ENCODE measurements at regions of chr10 and their contacts with region 1.

Region 1: GRCh38 chr10:103685880-103686669 is 169.3 kb downstream of the SH3PXD2A start:
- DNase-seq: peak; percentile 62 to 87 (median 73)
- ATAC-seq: peak; percentile 99
- H3K4me3 ChIP-seq: no peak overlapping the region
- H3K4me3 Mint-ChIP-seq: no peak overlapping the region
- H3K27ac ChIP-seq: no peak overlapping the region
- H3K27ac Mint-ChIP-seq: no peak overlapping the region
- H3K4me1 ChIP-seq: peaks cover 5% of the 10 kb centered on the region
- H3K4me1 Mint-ChIP-seq: peaks cover 7% of the 10 kb centered on the region
- H3K27me3 ChIP-seq: no peaks in the 10 kb centered on the region
- H3K27me3 Mint-ChIP-seq: peaks cover 4% of the 10 kb centered on the region
- CTCF ChIP-seq: peak; percentile 93

Region 2: DNA sequence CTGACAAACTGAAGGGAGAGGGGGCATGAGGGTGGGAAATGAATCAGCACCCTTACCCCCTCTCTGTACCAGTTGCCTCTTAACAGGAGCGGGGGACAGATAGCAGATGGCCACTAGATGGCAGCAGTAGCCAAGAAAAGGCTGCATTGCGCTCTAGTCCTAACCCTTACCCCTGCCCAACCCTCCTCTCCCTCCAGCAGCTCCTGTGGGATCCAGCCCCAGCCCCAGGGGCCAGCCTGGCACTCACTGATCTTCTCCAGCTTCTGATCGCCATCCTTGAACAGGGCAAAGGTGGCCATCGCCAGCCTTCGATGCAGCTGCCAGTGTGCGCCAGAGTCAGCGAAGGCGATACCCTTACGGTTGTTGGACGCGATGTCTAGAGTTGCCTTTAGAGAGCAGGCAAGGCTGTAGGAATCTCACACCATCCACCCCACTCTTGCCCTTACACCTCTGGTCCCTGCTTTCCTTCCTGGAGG is 851.0 kb before region 1 on chr10:
- CTCF ChIA-PET with region 1: no interaction called
- POLR2A ChIA-PET with region 1: no interaction called
- intact Hi-C with region 1: loop called in 1 of 2 experiments (anchors 10 kb)
- DNase-seq: peak; percentile 55 to 87 (median 68)
- ATAC-seq: peak; percentile 93
- H3K4me3 ChIP-seq: no peak overlapping the region
- H3K4me3 Mint-ChIP-seq: no peak overlapping the region
- H3K27ac ChIP-seq: no peak overlapping the region
- H3K27ac Mint-ChIP-seq: no peak overlapping the region
- H3K4me1 ChIP-seq: peaks cover 5% of the 10 kb centered on the region
- H3K4me1 Mint-ChIP-seq: no peaks in the 10 kb centered on the region
- H3K27me3 ChIP-seq: no peaks in the 10 kb centered on the region
- H3K27me3 Mint-ChIP-seq: peaks cover 10% of the 10 kb centered on the region
- CTCF ChIP-seq: peak; percentile 86

Region 3: DNA sequence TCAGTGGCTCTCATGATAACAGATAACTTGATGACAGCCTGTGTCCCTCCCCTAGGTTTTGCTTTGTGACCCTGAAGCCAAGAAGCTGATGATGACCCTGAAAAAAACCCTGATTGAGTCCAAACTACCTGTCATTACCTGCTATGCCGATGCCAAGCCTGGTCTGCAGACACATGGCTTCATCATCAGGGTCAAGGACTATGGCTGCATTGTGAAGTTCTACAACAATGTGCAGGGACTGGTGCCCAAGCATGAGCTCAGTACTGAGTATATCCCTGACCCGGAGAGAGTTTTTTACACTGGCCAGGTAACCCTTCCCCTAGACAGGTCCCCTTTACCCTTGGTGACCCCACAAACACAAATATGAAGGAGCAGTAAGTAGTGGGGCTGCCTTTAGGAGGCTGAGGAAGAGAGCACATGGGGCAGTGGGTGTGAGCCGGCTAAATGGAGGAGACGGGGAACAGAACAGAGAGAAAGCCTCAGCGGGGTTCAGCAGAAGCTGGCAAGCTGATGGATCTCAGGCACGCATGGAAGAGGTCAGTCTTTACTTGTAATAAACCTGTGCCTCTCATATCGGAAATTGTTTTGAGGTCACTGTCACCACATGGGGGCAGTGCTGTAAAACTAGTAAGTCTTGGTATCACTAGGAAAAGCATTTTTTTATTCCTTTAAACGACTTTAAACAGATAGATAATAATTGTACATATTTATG is 269.5 kb before region 1 on chr10:
- CTCF ChIA-PET with region 1: no interaction called
- POLR2A ChIA-PET with region 1: no interaction called
- intact Hi-C with region 1: loop called (anchors 2 to 5 kb)
- DNase-seq: peak; percentile 35 to 81 (median 56)
- ATAC-seq: peak; percentile 54
- H3K4me3 ChIP-seq: no peak overlapping the region
- H3K4me3 Mint-ChIP-seq: no peak overlapping the region
- H3K27ac ChIP-seq: no peak overlapping the region
- H3K27ac Mint-ChIP-seq: no peak overlapping the region
- H3K4me1 ChIP-seq: no peaks in the 10 kb centered on the region
- H3K4me1 Mint-ChIP-seq: no peaks in the 10 kb centered on the region
- H3K27me3 ChIP-seq: no peaks in the 10 kb centered on the region
- H3K27me3 Mint-ChIP-seq: no peaks in the 10 kb centered on the region
- CTCF ChIP-seq: peak; percentile 90

Region 4: DNA sequence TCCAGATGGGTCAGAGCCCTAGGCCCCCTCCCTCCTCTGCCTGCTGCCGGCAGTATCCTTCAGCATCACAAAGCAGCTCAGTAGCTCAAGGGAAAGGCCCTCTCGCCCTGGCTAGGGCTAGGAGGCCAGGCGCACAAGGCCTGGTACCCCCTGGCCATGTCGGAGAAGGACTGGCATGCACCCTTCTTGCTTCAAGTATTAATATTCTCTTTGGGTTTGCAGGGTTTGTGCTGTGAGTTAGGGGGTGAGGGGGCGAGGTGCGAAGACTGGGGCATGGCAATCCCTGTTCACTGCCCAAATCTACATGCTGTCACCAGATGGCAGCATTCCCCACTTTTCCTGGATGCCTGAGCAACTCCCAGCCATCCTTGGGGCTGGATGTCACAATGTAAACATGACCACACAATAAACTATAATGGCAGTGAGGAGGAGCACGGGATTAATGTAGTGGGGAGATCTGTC is 87.4 kb before region 1 on chr10:
- CTCF ChIA-PET with region 1: interaction called, 7 read pairs
- POLR2A ChIA-PET with region 1: no interaction called
- intact Hi-C with region 1: loop called in 1 of 2 experiments (anchors 1 kb)
- DNase-seq: peak in 4 of 14 experiments; percentile 6 to 44 (median 40)
- ATAC-seq: no peak
- H3K4me3 ChIP-seq: no peak overlapping the region
- H3K4me3 Mint-ChIP-seq: no peak overlapping the region
- H3K27ac ChIP-seq: no peak overlapping the region
- H3K27ac Mint-ChIP-seq: no peak overlapping the region
- H3K4me1 ChIP-seq: no peaks in the 10 kb centered on the region
- H3K4me1 Mint-ChIP-seq: no peaks in the 10 kb centered on the region
- H3K27me3 ChIP-seq: no peaks in the 10 kb centered on the region
- H3K27me3 Mint-ChIP-seq: no peaks in the 10 kb centered on the region
- CTCF ChIP-seq: peak; percentile 26

Region 5: DNA sequence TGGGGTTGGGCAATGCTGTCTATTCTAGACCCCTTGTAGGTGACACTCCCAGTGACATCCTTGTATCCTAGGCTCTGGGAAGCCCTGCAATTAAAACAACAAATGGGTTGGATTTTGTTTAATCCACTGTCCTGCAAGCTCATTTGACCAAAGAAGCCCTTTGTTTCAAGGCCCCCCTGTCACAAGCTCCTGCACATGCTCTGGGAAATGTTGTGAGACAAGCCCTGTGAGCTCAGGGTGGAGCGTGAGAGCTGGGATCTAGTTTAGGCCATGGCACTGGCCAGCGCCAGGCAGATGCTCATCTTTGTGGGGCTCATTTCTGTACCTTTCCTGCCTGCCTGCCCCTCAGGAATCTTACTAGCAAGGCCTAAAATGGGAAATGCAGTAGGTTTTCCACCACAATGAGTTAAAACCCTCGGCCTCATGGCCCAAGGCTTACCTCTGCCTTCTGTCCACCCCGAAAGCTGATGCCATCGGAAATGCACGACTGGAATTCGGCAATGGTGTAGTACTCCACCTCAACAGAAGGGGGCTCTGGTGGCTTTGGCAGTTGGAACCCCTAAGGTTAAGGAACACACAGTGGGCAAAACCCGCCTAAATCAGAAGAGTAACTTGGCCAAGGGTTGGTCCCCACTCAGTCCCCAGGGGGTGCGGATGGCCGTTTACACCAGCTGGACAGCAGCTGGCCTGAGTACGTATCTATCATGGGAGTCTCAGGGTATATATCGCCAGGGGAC is 80.5 kb before region 1 on chr10:
- CTCF ChIA-PET with region 1: interaction called, 30 read pairs
- POLR2A ChIA-PET with region 1: no interaction called
- intact Hi-C with region 1: loop called (anchors 1 kb)
- DNase-seq: peak; percentile 12 to 68 (median 40)
- ATAC-seq: peak; percentile 64
- H3K4me3 ChIP-seq: no peak overlapping the region
- H3K4me3 Mint-ChIP-seq: no peak overlapping the region
- H3K27ac ChIP-seq: no peak overlapping the region
- H3K27ac Mint-ChIP-seq: no peak overlapping the region
- H3K4me1 ChIP-seq: no peaks in the 10 kb centered on the region
- H3K4me1 Mint-ChIP-seq: no peaks in the 10 kb centered on the region
- H3K27me3 ChIP-seq: no peaks in the 10 kb centered on the region
- H3K27me3 Mint-ChIP-seq: no peaks in the 10 kb centered on the region
- CTCF ChIP-seq: peak; percentile 64

Region 6: DNA sequence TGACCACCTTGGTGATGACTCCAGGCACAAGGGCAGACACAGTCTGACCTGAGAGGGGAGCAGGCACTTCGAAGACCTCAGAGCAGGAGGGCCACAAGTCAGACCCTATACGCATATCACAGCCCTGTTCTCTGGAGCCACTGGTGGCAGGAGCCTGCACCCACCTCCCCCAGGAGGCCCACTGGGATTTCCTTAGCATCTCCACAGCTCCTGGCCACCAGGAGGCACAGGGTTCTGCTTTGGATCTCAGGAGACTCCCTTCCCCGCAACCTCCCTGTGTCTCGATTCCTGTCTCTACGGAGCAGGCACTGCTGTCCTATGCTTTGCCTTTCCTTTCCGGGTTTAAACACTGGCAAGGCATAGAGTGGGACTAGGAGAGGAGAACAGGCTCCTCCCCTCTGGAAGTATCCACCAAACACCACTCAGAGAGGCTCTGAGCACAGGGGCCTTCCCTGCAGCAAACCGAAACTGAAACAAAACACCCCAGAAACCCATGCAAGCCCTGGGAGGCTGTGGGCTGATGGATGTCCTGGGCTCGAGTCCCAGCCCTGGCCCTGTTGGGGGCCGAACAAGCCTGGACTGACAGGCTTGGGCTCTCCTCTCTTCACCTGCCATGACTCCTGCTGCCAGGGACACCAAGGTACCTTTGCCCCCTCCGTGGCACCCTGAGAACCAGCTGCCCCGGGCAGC is 26.3 kb before region 1 on chr10:
- CTCF ChIA-PET with region 1: interaction called, 18 read pairs
- POLR2A ChIA-PET with region 1: no interaction called
- intact Hi-C with region 1: no loop called
- DNase-seq: peak in 13 of 14 experiments; percentile 20 to 81 (median 38)
- ATAC-seq: peak; percentile 73
- H3K4me3 ChIP-seq: peak overlapping the region; percentile 86
- H3K4me3 Mint-ChIP-seq: peak overlapping the region; percentile 92
- H3K27ac ChIP-seq: peak overlapping the region; percentile 45 to 51
- H3K27ac Mint-ChIP-seq: peak overlapping the region; percentile 88
- H3K4me1 ChIP-seq: peaks cover 45% of the 10 kb centered on the region
- H3K4me1 Mint-ChIP-seq: peaks cover 19% of the 10 kb centered on the region
- H3K27me3 ChIP-seq: no peaks in the 10 kb centered on the region
- H3K27me3 Mint-ChIP-seq: no peaks in the 10 kb centered on the region
- CTCF ChIP-seq: no peak

Region 7: DNA sequence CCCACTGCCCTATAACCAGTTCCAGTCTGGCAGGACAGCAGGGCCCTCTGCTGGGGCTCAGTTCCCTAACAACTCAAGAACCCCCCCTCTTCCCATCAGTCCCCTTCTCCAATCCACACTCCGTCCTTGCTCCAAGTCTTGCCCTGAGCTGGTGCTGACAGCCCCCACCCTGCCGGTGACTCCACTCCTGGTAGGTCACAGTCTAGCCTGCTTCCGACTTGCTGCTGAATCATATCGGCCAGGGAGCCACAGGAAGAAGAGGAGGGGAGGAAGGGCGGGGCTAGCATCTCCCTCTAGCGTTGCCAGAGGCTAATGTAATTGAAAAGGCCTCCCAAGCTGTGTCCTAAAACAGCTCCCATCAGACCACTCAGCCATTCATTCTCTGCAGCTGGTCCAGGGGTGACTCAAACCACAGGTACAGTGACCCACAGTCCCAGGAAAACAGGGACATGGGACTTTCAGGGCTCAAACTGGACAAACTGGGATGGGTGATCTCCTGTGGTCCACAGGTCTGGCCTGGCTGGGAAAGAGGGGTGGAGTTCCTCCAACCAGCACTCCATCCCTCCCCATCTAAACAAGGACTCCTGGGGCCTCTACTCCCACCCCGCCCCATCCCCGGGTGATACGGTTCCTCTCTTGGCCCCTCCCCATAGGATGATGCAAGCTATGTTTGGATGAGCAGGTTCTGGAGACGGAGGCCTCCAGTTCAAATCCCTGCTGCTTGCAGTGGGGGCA is 10.5 kb after region 1 on chr10:
- CTCF ChIA-PET with region 1: interaction called, 14 read pairs
- POLR2A ChIA-PET with region 1: no interaction called
- intact Hi-C with region 1: no loop called
- DNase-seq: peak; percentile 36 to 87 (median 66)
- ATAC-seq: peak; percentile 70
- H3K4me3 ChIP-seq: no peak overlapping the region
- H3K4me3 Mint-ChIP-seq: peak overlapping the region; percentile 81
- H3K27ac ChIP-seq: no peak overlapping the region
- H3K27ac Mint-ChIP-seq: peak overlapping the region; percentile 75
- H3K4me1 ChIP-seq: peaks cover 49% of the 10 kb centered on the region
- H3K4me1 Mint-ChIP-seq: peaks cover 20% of the 10 kb centered on the region
- H3K27me3 ChIP-seq: no peaks in the 10 kb centered on the region
- H3K27me3 Mint-ChIP-seq: peaks cover 4% of the 10 kb centered on the region
- CTCF ChIP-seq: peak; percentile 39

Region 8: DNA sequence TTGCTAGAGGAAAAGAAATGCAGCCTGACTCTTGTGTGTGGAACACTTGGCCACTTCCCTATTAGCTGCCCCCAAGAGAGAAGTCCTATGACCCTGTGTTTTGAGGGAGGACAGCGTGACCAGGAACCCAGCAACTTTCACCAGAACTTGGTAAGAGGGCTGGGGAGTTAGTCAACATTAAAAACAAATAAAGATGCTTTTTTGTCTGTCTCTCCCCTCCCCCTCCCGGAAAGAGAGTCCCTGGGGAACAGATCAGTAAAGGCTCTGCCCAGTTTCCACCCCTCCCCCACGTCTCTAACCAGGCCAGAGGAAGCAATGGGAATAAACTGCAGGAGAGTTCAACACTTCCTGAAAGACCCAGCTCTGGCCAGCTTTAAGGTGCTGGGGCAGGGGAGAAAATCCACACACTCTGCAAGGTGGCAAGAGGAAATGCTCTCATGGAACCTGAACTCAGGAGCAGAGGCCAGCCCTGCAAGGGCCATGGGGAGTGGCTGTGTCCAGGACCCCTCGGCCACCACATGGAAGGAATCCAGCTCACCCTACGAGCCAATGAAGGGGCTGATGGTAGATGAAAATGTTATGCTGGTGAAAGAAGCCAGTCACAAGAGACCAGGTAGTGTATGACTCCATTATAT is 147.8 kb after region 1 on chr10:
- CTCF ChIA-PET with region 1: no interaction called
- POLR2A ChIA-PET with region 1: no interaction called
- intact Hi-C with region 1: no loop called
- DNase-seq: no peak
- ATAC-seq: no peak
- H3K4me3 ChIP-seq: no peak overlapping the region
- H3K4me3 Mint-ChIP-seq: no peak overlapping the region
- H3K27ac ChIP-seq: no peak overlapping the region
- H3K27ac Mint-ChIP-seq: no peak overlapping the region
- H3K4me1 ChIP-seq: no peaks in the 10 kb centered on the region
- H3K4me1 Mint-ChIP-seq: no peaks in the 10 kb centered on the region
- H3K27me3 ChIP-seq: no peaks in the 10 kb centered on the region
- H3K27me3 Mint-ChIP-seq: no peaks in the 10 kb centered on the region
- CTCF ChIP-seq: no peak